IMR-90 (cell line): ENCODE measurements at regions of chr6 and their contacts with region 1.

Region 1: DNA sequence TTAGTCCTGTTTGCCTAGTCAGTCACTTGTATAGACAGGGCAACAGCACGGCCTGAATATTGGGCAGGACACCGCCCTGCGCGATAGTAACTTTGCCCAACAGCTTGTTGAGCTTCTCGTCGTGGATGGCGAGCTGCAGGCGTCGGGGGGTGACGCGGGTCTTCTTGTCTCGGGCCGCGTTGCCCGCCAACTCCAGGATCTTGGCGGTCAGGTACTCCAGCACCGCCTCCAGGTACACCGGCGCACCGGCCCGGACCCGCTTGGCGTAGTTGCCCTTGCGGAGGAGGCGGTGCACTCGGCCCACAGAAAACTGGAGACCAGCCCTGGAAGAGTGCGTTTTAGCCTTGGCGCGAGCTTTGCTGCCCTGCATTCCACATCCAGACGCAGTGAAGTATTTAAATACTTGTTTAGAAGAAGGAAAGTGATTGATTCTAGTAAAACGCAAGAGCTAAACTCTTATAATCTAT is 92.8 kb upstream of the BTN3A2 start:
- DNase-seq: no peak
- ATAC-seq: peak; percentile 4
- H3K4me3 ChIP-seq: peak overlapping the region; percentile 68
- H3K27ac ChIP-seq: peak overlapping the region; percentile 75
- H3K4me1 ChIP-seq: peaks cover 4% of the 10 kb centered on the region
- H3K27me3 ChIP-seq: no peaks in the 10 kb centered on the region
- CTCF ChIP-seq: no peak
- POLR2A ChIP-seq: no peak
- RAD21 ChIP-seq: no peak

Region 2: DNA sequence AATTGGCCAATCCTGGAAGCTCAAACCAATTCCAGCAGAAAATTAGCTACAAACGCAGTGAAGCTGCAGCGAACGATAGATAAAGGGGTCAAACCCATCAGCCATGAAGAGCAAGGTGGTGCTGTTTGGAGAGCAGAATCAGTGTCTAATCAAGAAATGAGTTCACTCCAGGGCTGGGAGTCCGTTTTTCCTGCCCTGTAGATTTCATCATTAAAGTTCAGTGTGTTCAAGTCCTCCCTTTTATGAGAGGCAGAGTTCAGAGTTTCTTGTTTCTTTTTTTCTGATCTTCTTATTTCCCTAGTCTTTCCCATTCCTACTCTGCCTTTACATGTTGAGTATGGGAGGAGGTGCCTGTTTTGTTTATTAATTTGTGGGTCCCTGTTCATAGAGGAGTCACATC is 470.8 kb before region 1 on chr6:
- CTCF ChIA-PET with region 1: no interaction called
- POLR2A ChIA-PET with region 1: no interaction called
- dilution Hi-C with region 1: no loop called
- in situ Hi-C with region 1: no loop called
- intact Hi-C with region 1: no loop called
- DNase-seq: no peak
- ATAC-seq: no peak
- H3K4me3 ChIP-seq: no peak overlapping the region
- H3K27ac ChIP-seq: no peak overlapping the region
- H3K4me1 ChIP-seq: no peaks in the 10 kb centered on the region
- H3K27me3 ChIP-seq: no peaks in the 10 kb centered on the region
- CTCF ChIP-seq: no peak
- POLR2A ChIP-seq: no peak
- RAD21 ChIP-seq: no peak

Region 3: GRCh38 chr6:26204332-26205165 is 67.7 kb before region 1 on chr6:
- CTCF ChIA-PET with region 1: no interaction called
- POLR2A ChIA-PET with region 1: interaction called, 4 read pairs
- dilution Hi-C with region 1: no loop called
- in situ Hi-C with region 1: no loop called
- intact Hi-C with region 1: loop called (anchors 1 kb)
- DNase-seq: peak; percentile 99
- ATAC-seq: peak; percentile 79
- H3K4me3 ChIP-seq: peak overlapping the region; percentile 88
- H3K27ac ChIP-seq: peak overlapping the region; percentile 95
- H3K4me1 ChIP-seq: no peaks in the 10 kb centered on the region; the same call in 1 of the 2 replicates
- H3K27me3 ChIP-seq: no peaks in the 10 kb centered on the region
- CTCF ChIP-seq: peak; percentile 53
- POLR2A ChIP-seq: peak; percentile 99
- RAD21 ChIP-seq: 0 out of 2 replicates have a peak, but pooled peaks have one; percentile 1

Region 4: GRCh38 chr6:26223650-26224546 is 48.3 kb before region 1 on chr6:
- CTCF ChIA-PET with region 1: interaction called, 3 read pairs
- POLR2A ChIA-PET with region 1: interaction called, 3 read pairs
- dilution Hi-C with region 1: no loop called
- in situ Hi-C with region 1: no loop called
- intact Hi-C with region 1: loop called (anchors 2 kb)
- DNase-seq: peak; percentile 97
- ATAC-seq: peak; percentile 85
- H3K4me3 ChIP-seq: peak overlapping the region; percentile 81
- H3K27ac ChIP-seq: peak overlapping the region; percentile 96
- H3K4me1 ChIP-seq: peaks cover 8% of the 10 kb centered on the region
- H3K27me3 ChIP-seq: no peaks in the 10 kb centered on the region
- CTCF ChIP-seq: no peak
- POLR2A ChIP-seq: peak; percentile 77; the same call in 1 of the 2 replicates
- RAD21 ChIP-seq: no peak

Region 5: GRCh38 chr6:26260725-26261490 is 11.3 kb before region 1 on chr6:
- CTCF ChIA-PET with region 1: interaction called, 5 read pairs
- POLR2A ChIA-PET with region 1: interaction called, 16 read pairs
- dilution Hi-C with region 1: no loop called
- in situ Hi-C with region 1: no loop called
- intact Hi-C with region 1: no loop called
- DNase-seq: no peak
- ATAC-seq: no peak
- H3K4me3 ChIP-seq: no peak overlapping the region
- H3K27ac ChIP-seq: no peak overlapping the region
- H3K4me1 ChIP-seq: no peaks in the 10 kb centered on the region
- H3K27me3 ChIP-seq: no peaks in the 10 kb centered on the region
- CTCF ChIP-seq: no peak
- POLR2A ChIP-seq: no peak
- RAD21 ChIP-seq: no peak

Region 6: GRCh38 chr6:26366504-26366903 is 94.3 kb after region 1 on chr6:
- CTCF ChIA-PET with region 1: no interaction called
- POLR2A ChIA-PET with region 1: no interaction called
- dilution Hi-C with region 1: no loop called
- in situ Hi-C with region 1: no loop called
- intact Hi-C with region 1: no loop called
- DNase-seq: no peak
- ATAC-seq: no peak
- H3K4me3 ChIP-seq: no peak overlapping the region
- H3K27ac ChIP-seq: no peak overlapping the region
- H3K4me1 ChIP-seq: peaks cover 9% of the 10 kb centered on the region
- H3K27me3 ChIP-seq: no peaks in the 10 kb centered on the region
- CTCF ChIP-seq: no peak
- POLR2A ChIP-seq: no peak
- RAD21 ChIP-seq: no peak

Region 7: GRCh38 chr6:26493258-26493657 is 221.1 kb after region 1 on chr6:
- CTCF ChIA-PET with region 1: no interaction called
- POLR2A ChIA-PET with region 1: interaction called, 10 read pairs
- dilution Hi-C with region 1: no loop called
- in situ Hi-C with region 1: no loop called
- intact Hi-C with region 1: no loop called
- DNase-seq: peak; percentile 55
- ATAC-seq: peak; percentile 75
- H3K4me3 ChIP-seq: no peak overlapping the region
- H3K27ac ChIP-seq: no peak overlapping the region
- H3K4me1 ChIP-seq: no peaks in the 10 kb centered on the region
- H3K27me3 ChIP-seq: peaks cover 6% of the 10 kb centered on the region
- CTCF ChIP-seq: peak; percentile 38
- POLR2A ChIP-seq: no peak
- RAD21 ChIP-seq: peak; percentile 53